ENCODE measurements at regions of chr11 and their contacts with region 1.

Region 1: DNA sequence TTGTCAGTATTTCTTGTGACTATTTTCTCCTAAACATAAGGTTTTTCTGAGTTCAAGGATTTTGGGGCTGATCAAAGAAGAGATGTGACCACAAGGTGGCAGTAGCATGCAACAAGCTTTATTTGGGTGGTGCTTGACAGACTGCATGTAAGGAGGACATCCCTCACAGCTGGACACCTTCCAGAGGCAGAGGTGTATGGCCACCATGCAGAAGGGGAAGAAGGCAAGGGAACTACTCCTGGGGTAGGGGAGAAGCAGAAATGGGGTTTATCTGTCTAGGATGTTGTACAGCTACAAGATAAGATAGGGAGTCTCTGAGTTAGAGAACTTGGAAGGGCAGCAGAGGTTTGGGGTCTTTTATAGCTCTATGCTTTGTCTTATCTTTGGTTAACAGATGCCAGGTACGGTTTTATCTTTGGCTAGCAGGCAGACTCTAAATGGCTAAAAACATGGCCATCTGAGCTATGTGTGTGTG is 5.1 kb upstream of the BIRC2 start:
- DNase-seq: peak; percentile 86
- H3K4me3 ChIP-seq: no peak overlapping the region
- H3K27ac ChIP-seq: no peak overlapping the region
- H3K4me1 ChIP-seq: peaks cover 24% of the 10 kb centered on the region
- H3K27me3 ChIP-seq: no peaks in the 10 kb centered on the region
- CTCF ChIP-seq: peak; percentile 73 to 74
- POLR2A ChIP-seq: no peak

Region 2: GRCh38 chr11:102287964-102288724 is 53.7 kb before region 1 on chr11:
- CTCF ChIA-PET with region 1: interaction called, 32 read pairs
- POLR2A ChIA-PET with region 1: no interaction called
- dilution Hi-C with region 1: no loop called
- intact Hi-C with region 1: loop called (anchors 2 kb)
- DNase-seq: peak; percentile 66
- H3K4me3 ChIP-seq: no peak overlapping the region
- H3K27ac ChIP-seq: no peak overlapping the region
- H3K4me1 ChIP-seq: no peaks in the 10 kb centered on the region
- H3K27me3 ChIP-seq: no peaks in the 10 kb centered on the region
- CTCF ChIP-seq: peak; percentile 55 to 65
- POLR2A ChIP-seq: no peak

Region 3: DNA sequence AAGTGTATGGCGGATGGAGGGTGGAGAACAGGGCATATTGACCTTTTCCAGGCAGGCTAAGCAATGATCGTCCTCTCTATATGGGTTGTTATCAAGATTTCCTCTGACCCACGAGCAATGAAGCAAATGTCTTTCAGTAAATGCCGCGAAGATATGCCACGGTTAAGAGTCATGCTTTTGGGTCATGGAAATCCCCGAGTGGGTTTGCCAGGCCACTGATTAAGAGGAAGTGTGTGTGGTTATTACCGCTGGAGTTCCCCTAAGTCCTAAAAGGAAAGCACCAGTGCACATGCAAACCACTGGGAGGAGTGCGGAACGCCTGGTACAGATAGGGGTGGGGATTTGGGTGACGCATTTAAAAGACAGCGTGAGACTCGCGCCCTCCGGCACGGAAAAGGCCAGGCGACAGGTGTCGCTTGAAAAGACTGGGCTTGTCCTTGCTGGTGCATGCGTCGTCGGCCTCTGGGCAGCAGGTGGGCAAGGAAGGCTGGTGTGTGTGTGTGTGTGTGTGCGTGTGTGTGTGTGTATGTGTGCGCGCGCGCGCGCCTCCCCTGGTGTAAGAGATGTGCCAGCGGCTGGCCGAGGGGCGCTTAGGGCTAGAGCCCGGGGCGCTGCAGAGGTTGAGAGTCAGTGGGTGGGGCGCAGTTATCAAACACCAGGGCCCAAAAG is 24.6 kb before region 1 on chr11 and contains the start of gene BIRC3:
- CTCF ChIA-PET with region 1: interaction called, 29 read pairs
- POLR2A ChIA-PET with region 1: no interaction called
- dilution Hi-C with region 1: no loop called
- intact Hi-C with region 1: loop called (anchors 2 kb)
- DNase-seq: peak; percentile 91
- H3K4me3 ChIP-seq: peak within 1 kb of the TSS; percentile 10 to 46 (median 36)
- H3K27ac ChIP-seq: peak within 1 kb of the TSS; percentile 0
- H3K4me1 ChIP-seq: peaks cover 6% of the 10 kb centered on the region
- H3K27me3 ChIP-seq: no peaks in the 10 kb centered on the region
- CTCF ChIP-seq: peak; percentile 7 to 24
- POLR2A ChIP-seq: no peak
- total RNA-seq, gene BIRC3: 0.60 and 1.4 TPM in 2 replicates

Region 4: GRCh38 chr11:102367364-102367763 is 25.5 kb after region 1 on chr11:
- CTCF ChIA-PET with region 1: interaction called, 38 read pairs
- POLR2A ChIA-PET with region 1: no interaction called
- dilution Hi-C with region 1: no loop called
- intact Hi-C with region 1: no loop called
- DNase-seq: peak; percentile 66
- H3K4me3 ChIP-seq: no peak overlapping the region
- H3K27ac ChIP-seq: no peak overlapping the region
- H3K4me1 ChIP-seq: peaks cover 9% of the 10 kb centered on the region
- H3K27me3 ChIP-seq: no peaks in the 10 kb centered on the region
- CTCF ChIP-seq: no peak
- POLR2A ChIP-seq: no peak

Region 5: DNA sequence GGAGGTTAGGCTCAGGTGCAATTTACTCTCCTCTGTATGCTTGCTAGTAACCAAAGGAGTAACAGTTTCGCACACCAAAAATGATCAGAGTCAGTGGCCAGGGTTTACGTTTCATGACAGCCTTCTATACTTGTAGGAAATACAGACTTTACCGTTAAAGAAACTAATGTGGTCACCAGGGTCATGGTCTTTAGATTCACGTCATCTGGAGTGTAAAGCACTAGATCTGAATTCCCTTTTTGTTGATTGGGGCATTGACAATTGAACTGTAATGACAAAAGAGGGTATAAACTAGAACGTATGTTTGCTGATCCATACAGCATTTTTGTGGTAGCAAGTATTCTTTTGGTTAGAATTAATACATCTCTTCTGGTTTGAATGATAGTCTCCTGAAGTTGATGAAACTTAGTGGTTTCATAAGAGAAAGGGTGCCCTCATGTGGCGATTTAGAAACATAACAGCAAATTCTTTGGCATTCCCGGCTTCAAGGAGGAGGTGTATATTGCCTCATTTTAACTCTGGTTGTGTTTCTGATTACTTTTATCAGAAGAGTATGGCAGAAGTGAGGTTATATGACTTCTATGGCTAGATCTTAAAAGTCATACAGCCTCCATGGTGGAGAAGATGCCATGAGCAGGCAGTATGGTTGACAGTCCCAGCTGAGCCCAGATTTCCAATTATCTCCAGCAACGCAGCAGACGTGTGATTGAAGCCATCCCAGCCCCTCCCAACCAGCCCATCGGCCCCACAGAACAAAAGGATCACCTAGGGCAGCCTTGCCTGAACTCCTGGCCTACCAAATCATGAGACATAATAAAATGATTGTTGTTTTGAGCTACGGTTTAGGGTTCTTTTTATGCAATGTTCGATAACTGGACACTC is 153.5 kb after region 1 on chr11:
- CTCF ChIA-PET with region 1: interaction called, 36 read pairs
- POLR2A ChIA-PET with region 1: no interaction called
- dilution Hi-C with region 1: no loop called
- intact Hi-C with region 1: loop called (anchors 1 kb)
- DNase-seq: peak; percentile 77
- H3K4me3 ChIP-seq: no peak overlapping the region
- H3K27ac ChIP-seq: no peak overlapping the region
- H3K4me1 ChIP-seq: peaks cover 13% of the 10 kb centered on the region
- H3K27me3 ChIP-seq: no peaks in the 10 kb centered on the region
- CTCF ChIP-seq: peak; percentile 30 to 51
- POLR2A ChIP-seq: no peak

Region 6: DNA sequence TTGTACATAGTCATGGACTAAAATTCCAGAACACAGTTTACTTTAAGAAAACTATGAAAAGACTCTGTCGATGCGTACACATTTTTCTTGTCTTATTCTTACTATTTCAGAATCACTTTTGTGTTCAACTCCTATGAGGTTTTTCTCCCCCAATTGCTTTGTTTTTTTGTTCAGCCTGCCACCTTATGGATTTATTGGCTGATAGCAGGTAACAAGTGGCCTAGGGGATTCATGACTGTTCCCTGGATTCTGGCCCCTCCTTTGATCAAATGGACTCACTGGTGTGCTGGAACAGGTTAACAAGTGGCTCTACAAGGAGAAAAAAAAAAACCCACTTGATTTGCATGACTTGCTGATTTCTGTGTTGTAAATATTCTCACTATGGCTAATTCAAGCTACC is 272.6 kb after region 1 on chr11:
- CTCF ChIA-PET with region 1: interaction called, 72 read pairs
- POLR2A ChIA-PET with region 1: no interaction called
- dilution Hi-C with region 1: no loop called
- intact Hi-C with region 1: loop called (anchors 1 kb)
- DNase-seq: no peak
- H3K4me3 ChIP-seq: no peak overlapping the region
- H3K27ac ChIP-seq: no peak overlapping the region
- H3K4me1 ChIP-seq: peaks cover 11% of the 10 kb centered on the region
- H3K27me3 ChIP-seq: no peaks in the 10 kb centered on the region
- CTCF ChIP-seq: no peak
- POLR2A ChIP-seq: no peak

Region 7: DNA sequence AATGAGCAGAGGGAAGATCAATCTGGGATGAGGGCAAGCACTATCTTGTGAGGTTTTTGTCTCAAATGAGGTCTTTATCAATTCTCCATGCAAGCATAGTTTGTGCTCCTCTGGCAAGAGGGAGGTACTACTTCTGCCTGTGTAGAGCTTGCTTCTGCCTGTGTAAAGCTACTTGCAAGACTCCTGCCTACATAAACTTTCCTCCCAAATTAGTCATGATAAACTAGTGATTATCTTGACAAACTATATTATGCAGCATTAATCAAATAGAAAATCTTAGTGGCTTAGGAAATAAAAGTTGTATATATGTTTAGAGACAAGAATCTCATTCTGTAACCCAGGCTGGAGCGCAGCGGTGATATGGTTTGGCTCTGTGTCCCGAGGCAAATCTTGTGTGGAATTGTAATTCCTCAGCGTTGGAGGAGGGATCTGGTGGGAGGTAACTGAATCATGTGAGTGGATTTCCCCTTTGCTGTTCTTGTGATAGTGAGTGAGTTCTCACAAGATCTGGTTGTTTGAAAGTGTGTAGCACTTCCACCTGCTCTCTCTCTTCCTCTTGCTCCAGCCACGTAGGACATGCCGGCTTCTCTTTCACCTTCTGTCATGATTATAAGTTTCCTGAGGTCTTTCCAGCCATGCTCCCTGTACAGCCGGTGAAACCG is 446.6 kb after region 1 on chr11:
- CTCF ChIA-PET with region 1: no interaction called
- POLR2A ChIA-PET with region 1: no interaction called
- dilution Hi-C with region 1: no loop called
- intact Hi-C with region 1: no loop called
- DNase-seq: no peak
- H3K4me3 ChIP-seq: no peak overlapping the region
- H3K27ac ChIP-seq: no peak overlapping the region
- H3K4me1 ChIP-seq: no peaks in the 10 kb centered on the region
- H3K27me3 ChIP-seq: no peaks in the 10 kb centered on the region
- CTCF ChIP-seq: no peak
- POLR2A ChIP-seq: no peak

Region 8: GRCh38 chr11:102819491-102819890 is 477.6 kb after region 1 on chr11:
- CTCF ChIA-PET with region 1: no interaction called
- POLR2A ChIA-PET with region 1: no interaction called
- dilution Hi-C with region 1: no loop called
- intact Hi-C with region 1: no loop called
- DNase-seq: no peak
- H3K4me3 ChIP-seq: no peak overlapping the region
- H3K27ac ChIP-seq: no peak overlapping the region
- H3K4me1 ChIP-seq: no peaks in the 10 kb centered on the region
- H3K27me3 ChIP-seq: peaks cover 7 to 11% of the 10 kb centered on the region in 2 experiments
- CTCF ChIP-seq: no peak
- POLR2A ChIP-seq: no peak

Measured in endothelial cell of umbilical vein (primary cell).